CD8-positive, alpha-beta T cell (primary cell): ENCODE measurements at regions of chr14 and their contacts with region 1.

Region 1: GRCh38 chr14:43132441-43132840 is 1374.6 kb downstream of the FSCB start:
- DNase-seq: no peak
- ATAC-seq: no peak
- H3K4me3 ChIP-seq: no peak overlapping the region
- H3K4me3 Mint-ChIP-seq: no peak overlapping the region
- H3K27ac ChIP-seq: no peak overlapping the region
- H3K27ac Mint-ChIP-seq: no peak overlapping the region
- H3K4me1 ChIP-seq: no peaks in the 10 kb centered on the region
- H3K4me1 Mint-ChIP-seq: no peaks in the 10 kb centered on the region
- H3K27me3 ChIP-seq: no peaks in the 10 kb centered on the region
- H3K27me3 Mint-ChIP-seq: no peaks in the 10 kb centered on the region
- CTCF ChIP-seq: no peak

Region 2: DNA sequence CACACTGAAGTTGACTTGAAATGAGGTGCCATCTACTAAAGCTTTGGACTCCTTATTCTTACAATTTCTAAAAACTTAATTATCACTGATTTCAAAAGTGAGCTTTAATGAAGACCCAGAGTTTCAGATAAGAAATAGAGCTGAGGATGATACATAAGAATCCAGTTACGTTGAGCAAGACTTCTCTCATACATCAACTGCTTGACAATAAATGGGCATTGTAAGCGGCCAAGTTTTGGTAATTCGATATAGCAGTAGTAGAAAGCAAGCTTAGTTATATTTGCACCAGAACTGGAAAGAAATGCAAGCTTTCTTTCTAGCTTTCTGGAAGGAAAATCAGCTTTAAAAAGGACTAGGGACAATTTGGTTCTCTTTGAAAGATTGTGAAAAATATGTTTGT is 15.0 kb after region 1 on chr14:
- CTCF ChIA-PET with region 1: no interaction called
- POLR2A ChIA-PET with region 1: no interaction called
- intact Hi-C with region 1: loop called in 1 of 2 experiments (anchors 1 kb)
- DNase-seq: no peak
- ATAC-seq: no peak
- H3K4me3 ChIP-seq: no peak overlapping the region
- H3K4me3 Mint-ChIP-seq: no peak overlapping the region
- H3K27ac ChIP-seq: no peak overlapping the region
- H3K27ac Mint-ChIP-seq: no peak overlapping the region
- H3K4me1 ChIP-seq: no peaks in the 10 kb centered on the region
- H3K4me1 Mint-ChIP-seq: no peaks in the 10 kb centered on the region
- H3K27me3 ChIP-seq: no peaks in the 10 kb centered on the region
- H3K27me3 Mint-ChIP-seq: no peaks in the 10 kb centered on the region
- CTCF ChIP-seq: no peak